ENCODE measurements at regions of chr17 and their contacts with region 1.

Region 1: DNA sequence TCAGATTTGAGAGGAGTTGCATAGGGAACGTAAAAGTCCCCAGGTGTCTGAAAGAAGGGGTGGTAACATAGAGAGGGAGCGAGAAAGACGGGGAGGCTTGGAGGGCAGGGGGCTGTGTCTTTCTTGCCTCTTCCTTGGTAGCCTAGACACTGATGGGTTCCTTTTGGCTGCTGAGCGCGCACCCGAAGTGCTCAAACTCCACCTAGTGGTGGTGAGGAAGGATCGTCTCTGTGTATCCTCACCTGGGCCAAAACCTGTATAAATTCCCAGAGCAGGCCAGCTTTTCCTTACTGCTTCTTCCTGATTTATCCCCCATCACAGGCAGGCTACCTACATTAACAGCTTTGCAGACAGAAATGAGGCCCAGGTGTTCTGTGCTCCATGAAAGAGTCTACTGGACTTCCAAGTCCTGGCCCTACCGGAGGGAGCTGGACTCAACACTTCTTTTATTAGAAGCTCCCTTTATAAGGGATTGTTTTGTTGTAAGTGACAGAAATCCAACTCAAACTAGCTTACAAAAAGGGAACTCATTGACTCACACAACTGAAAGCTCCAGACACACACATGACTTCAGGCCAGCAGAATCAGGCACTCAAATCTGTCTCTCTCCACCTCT is 5.5 kb upstream of the SLC25A35 start:
- DNase-seq: peak; percentile 31
- ATAC-seq: peak; percentile 98
- H3K4me3 ChIP-seq: no peak overlapping the region
- H3K27ac ChIP-seq: no peak overlapping the region
- H3K4me1 ChIP-seq: no peaks in the 10 kb centered on the region
- H3K27me3 ChIP-seq: no peaks in the 10 kb centered on the region
- CTCF ChIP-seq: peak; percentile 86 to 96 (median 90); a peak in 5 of 6 replicates
- EP300 ChIP-seq: no peak
- POLR2A ChIP-seq: no peak
- RAD21 ChIP-seq: peak; percentile 90

Region 2: DNA sequence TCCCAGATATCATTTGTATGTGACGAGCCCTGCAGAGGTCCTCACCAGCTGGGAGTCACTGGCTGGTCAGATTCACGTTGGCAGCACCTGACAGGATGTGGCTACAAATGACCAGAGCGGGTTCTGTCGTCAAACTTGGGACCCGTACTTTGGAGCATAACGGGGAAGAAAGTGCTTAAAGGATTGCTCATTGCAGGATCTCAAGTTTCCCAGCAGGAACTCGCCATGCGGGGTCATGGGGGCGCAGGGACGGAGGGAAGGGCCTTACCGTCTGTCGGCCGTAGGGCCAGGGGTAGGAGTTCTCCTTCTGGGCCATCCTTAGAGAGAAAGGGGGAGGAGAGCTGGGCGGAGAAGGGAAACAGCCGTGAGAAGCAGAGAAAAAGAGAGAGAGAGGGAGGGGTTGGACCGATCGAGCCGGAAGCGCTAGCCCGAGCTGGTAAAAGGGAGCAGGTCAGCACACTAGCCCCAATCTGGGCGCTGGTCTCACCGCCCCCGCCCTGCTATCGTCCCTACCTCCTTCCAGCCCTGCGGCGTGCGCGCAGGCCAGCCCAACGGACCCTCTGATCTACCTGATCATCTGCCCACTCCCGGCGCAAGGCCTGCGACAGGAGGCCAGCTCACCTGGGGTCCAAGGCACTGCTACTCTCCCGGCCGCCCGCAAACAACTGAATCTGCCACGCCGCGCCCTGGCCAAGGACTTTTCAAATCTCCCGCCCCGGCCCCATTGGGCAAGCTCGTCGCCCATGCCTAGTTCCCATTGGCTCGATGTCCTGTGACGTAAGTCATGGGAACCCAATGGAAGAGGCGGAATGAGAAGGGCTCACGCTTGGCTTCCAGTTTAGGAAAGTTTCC is 90.6 kb before region 1 on chr17 and contains the start of gene AURKB:
- CTCF ChIA-PET with region 1: interaction called, 5 read pairs
- POLR2A ChIA-PET with region 1: interaction called, 12 read pairs
- RAD21 ChIA-PET with region 1: interaction called, 4 read pairs
- SMC1A ChIA-PET with region 1: interaction called, 16 read pairs
- in situ Hi-C with region 1: no loop called
- intact Hi-C with region 1: no loop called
- DNase-seq: peak; percentile 91
- ATAC-seq: peak; percentile 94
- H3K4me3 ChIP-seq: peak within 1 kb of the TSS; percentile 95
- H3K27ac ChIP-seq: peak within 1 kb of the TSS; percentile 83
- H3K4me1 ChIP-seq: no peaks in the 10 kb centered on the region
- H3K27me3 ChIP-seq: no peaks in the 10 kb centered on the region
- CTCF ChIP-seq: no peak
- EP300 ChIP-seq: no peak; a peak in 1 of 4 replicates
- POLR2A ChIP-seq: peak; percentile 96
- RAD21 ChIP-seq: no peak
- polyA plus RNA-seq, gene AURKB: 107 to 121 TPM

Region 3: GRCh38 chr17:8243827-8244226 is 56.9 kb before region 1 on chr17:
- CTCF ChIA-PET with region 1: interaction called, 16 read pairs
- POLR2A ChIA-PET with region 1: interaction called, 30 read pairs
- RAD21 ChIA-PET with region 1: interaction called, 26 read pairs
- SMC1A ChIA-PET with region 1: interaction called, 10 read pairs
- in situ Hi-C with region 1: no loop called
- intact Hi-C with region 1: loop called (anchors 2 kb)
- DNase-seq: no peak
- ATAC-seq: no peak
- H3K4me3 ChIP-seq: no peak overlapping the region
- H3K27ac ChIP-seq: no peak overlapping the region
- H3K4me1 ChIP-seq: peaks cover 10% of the 10 kb centered on the region
- H3K27me3 ChIP-seq: no peaks in the 10 kb centered on the region
- CTCF ChIP-seq: 0 out of 6 replicates have a peak, but pooled peaks of 1 of the 3 experiments have one; percentile 11
- EP300 ChIP-seq: no peak
- POLR2A ChIP-seq: no peak
- RAD21 ChIP-seq: no peak